ENCODE measurements at regions of chr3 and their contacts with region 1.

Region 1: GRCh38 chr3:101849051-101849720 is at the start of gene NFKBIZ:
- DNase-seq: peak; percentile 93
- ATAC-seq: peak; percentile 85
- H3K4me3 Mint-ChIP-seq: peak within 1 kb of the TSS; percentile 90
- H3K27ac Mint-ChIP-seq: peak within 1 kb of the TSS; percentile 95
- H3K4me1 Mint-ChIP-seq: peaks cover 40% of the 10 kb centered on the region
- H3K27me3 Mint-ChIP-seq: no peaks in the 10 kb centered on the region
- CTCF ChIP-seq: no peak
- total RNA-seq, gene NFKBIZ: 15.1 to 17.9 TPM (median 16.9 TPM) in 3 replicates

Region 2: DNA sequence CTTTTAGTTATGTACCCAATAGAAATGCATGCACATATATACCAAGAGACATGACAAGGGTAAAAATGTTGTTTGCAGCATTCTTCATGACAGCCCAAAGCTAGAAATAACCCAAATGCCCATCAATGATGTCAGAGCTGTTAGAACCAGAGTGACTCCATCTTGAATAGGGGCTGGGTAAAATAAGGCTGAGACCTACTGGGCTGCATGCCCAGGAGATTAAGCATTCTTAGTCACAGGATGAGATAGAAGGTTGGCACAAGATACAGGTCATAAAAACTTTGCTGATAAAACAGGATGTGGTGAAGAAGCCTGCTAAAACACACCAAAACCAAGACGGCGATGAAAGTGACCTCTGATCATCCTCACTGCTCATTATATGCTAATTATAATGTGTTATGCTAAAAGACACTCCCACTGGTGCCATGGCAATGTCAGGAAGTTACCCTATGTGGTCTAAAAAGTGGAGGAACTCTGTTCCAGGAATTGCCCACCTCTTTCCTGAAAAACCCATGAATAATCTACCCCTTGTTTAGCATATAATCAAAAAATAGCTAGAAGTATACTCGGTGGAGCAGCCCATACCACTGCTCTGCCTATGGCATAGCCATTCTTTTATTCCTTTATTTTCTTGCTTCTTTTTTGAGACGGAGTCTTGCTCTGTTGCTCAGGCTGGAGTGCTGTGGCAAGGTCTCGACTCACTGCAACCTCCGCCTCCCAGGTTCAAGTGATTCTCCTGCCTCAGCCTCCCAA is 205.1 kb before region 1 on chr3:
- CTCF ChIA-PET with region 1: no interaction called
- POLR2A ChIA-PET with region 1: no interaction called
- DNase-seq: no peak
- ATAC-seq: no peak
- H3K4me3 Mint-ChIP-seq: no peak overlapping the region
- H3K27ac Mint-ChIP-seq: no peak overlapping the region
- H3K4me1 Mint-ChIP-seq: peaks cover 27% of the 10 kb centered on the region
- H3K27me3 Mint-ChIP-seq: no peaks in the 10 kb centered on the region
- CTCF ChIP-seq: no peak

Region 3: GRCh38 chr3:101827211-101828174 is 21.7 kb before region 1 on chr3:
- CTCF ChIA-PET with region 1: interaction called, 10 read pairs
- POLR2A ChIA-PET with region 1: interaction called, 20 read pairs
- DNase-seq: peak; percentile 54
- ATAC-seq: peak; percentile 90
- H3K4me3 Mint-ChIP-seq: peak overlapping the region; percentile 82
- H3K27ac Mint-ChIP-seq: peak overlapping the region; percentile 80
- H3K4me1 Mint-ChIP-seq: peaks cover 23% of the 10 kb centered on the region
- H3K27me3 Mint-ChIP-seq: no peaks in the 10 kb centered on the region
- CTCF ChIP-seq: no peak

Region 4: DNA sequence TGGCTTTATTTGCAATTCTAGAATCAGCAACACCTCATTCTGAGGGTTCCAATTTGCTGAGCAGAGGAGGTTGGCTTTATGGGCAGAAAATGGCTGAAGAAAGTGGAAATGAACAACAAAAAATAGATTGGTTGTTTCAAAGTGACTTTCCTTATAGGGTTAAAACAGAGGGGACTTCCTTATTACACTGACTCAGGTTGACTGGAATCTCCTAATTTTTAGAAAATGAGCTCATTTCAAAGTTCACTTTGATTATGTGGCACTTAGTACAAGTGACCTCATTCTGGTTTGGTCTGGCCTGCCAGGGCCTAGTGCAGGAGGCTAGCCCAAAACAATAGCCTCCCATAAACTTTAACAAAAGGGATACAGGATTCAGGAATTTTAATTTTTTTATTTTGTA is 41.5 kb after region 1 on chr3:
- CTCF ChIA-PET with region 1: no interaction called
- POLR2A ChIA-PET with region 1: no interaction called
- DNase-seq: no peak
- ATAC-seq: no peak
- H3K4me3 Mint-ChIP-seq: no peak overlapping the region
- H3K27ac Mint-ChIP-seq: no peak overlapping the region
- H3K4me1 Mint-ChIP-seq: no peaks in the 10 kb centered on the region
- H3K27me3 Mint-ChIP-seq: no peaks in the 10 kb centered on the region
- CTCF ChIP-seq: no peak

Region 5: DNA sequence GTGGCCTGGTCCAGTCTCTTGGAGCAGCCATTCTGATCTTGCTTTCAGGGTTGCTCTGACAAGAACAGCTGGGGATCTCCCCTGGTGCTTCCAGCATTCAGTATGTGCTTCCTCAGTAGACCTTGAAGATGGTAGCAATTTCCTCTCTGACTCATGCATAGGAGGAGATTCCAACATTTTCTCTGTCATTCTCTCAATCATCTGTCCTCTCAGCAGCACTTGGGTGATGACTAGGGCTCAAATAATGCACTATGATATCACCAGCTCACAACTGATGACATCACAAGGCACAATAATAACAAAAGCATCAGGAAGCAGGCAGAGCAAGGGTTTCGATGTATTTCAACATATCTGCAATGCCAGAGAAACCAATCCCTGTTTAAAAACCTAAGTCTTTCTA is 52.9 kb after region 1 on chr3:
- CTCF ChIA-PET with region 1: no interaction called
- POLR2A ChIA-PET with region 1: no interaction called
- DNase-seq: no peak
- ATAC-seq: no peak
- H3K4me3 Mint-ChIP-seq: no peak overlapping the region
- H3K27ac Mint-ChIP-seq: no peak overlapping the region
- H3K4me1 Mint-ChIP-seq: peaks cover 13% of the 10 kb centered on the region
- H3K27me3 Mint-ChIP-seq: no peaks in the 10 kb centered on the region; the same call in 1 of the 2 replicates
- CTCF ChIP-seq: no peak

Region 6: GRCh38 chr3:101936419-101937356 is 87.5 kb after region 1 on chr3:
- CTCF ChIA-PET with region 1: no interaction called
- POLR2A ChIA-PET with region 1: no interaction called
- DNase-seq: no peak
- ATAC-seq: no peak
- H3K4me3 Mint-ChIP-seq: no peak overlapping the region
- H3K27ac Mint-ChIP-seq: no peak overlapping the region
- H3K4me1 Mint-ChIP-seq: no peaks in the 10 kb centered on the region
- H3K27me3 Mint-ChIP-seq: no peaks in the 10 kb centered on the region
- CTCF ChIP-seq: no peak

Measured in WTC11 (cell line).